ENCODE measurements at regions of chr2 and their contacts with region 1.

Region 1: DNA sequence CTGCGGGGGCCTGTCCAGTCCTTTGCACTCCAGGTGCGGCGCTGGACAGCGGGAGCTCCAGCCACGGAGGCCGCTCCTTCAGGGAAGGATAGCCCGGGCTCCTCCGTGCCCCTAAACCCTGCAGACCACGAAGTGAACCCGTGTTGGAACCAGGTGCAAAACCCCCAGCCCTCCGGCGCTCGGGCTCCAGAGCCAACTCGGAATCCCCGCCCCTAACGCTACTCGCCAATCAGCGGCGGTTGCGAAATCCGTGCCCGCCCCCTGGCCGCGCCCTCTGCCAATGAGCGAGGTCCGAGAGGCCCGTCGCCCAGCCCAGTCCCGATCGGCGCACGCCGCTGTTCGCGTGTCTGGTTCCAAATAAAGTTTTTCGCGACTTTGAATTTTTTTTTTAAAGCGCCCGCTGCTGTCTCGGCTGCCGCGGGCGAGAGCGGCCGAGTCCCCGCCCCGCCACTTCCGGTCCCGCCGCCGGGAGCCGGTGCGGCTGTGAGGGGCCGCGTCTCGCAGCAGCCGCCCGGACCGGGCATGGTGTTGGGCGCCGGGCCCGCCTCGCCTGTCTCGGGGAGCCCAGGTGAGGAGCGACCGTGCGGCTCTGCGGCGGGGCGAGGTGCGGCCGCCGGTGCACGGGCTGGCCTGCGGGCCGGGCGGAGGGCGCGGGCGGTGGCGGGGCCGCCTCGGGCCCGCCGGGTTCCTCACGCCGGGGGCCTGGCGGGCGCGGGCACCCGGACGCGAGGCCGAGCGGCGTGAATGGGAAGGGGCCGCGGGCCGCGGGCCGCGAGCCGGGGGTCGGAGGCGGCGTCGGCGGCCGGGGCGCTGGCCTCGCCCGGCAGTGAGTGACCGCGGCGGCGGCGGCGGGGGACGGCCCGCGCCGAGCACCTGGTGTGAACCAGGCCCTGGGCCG is at the start of gene UBE2F:
- DNase-seq: peak; percentile 96
- H3K4me3 Mint-ChIP-seq: peak within 1 kb of the TSS; percentile 81
- H3K27ac Mint-ChIP-seq: peak within 1 kb of the TSS; percentile 65
- H3K4me1 Mint-ChIP-seq: peaks cover 40% of the 10 kb centered on the region
- H3K27me3 Mint-ChIP-seq: no peaks in the 10 kb centered on the region
- total RNA-seq, gene UBE2F: 43.4 to 45.5 TPM

Region 2: GRCh38 chr2:237691908-237692600 is 274.8 kb before region 1 on chr2:
- CTCF ChIA-PET with region 1: no interaction called
- intact Hi-C with region 1: loop called (anchors 5 kb)
- DNase-seq: peak; percentile 94
- H3K4me3 Mint-ChIP-seq: peak overlapping the region; percentile 87
- H3K27ac Mint-ChIP-seq: peak overlapping the region; percentile 95
- H3K4me1 Mint-ChIP-seq: peaks cover 66% of the 10 kb centered on the region
- H3K27me3 Mint-ChIP-seq: no peaks in the 10 kb centered on the region

Region 3: GRCh38 chr2:237758185-237758584 is 208.6 kb before region 1 on chr2:
- CTCF ChIA-PET with region 1: no interaction called
- intact Hi-C with region 1: no loop called
- DNase-seq: no peak
- H3K4me3 Mint-ChIP-seq: no peak overlapping the region
- H3K27ac Mint-ChIP-seq: no peak overlapping the region
- H3K4me1 Mint-ChIP-seq: no peaks in the 10 kb centered on the region
- H3K27me3 Mint-ChIP-seq: no peaks in the 10 kb centered on the region

Region 4: DNA sequence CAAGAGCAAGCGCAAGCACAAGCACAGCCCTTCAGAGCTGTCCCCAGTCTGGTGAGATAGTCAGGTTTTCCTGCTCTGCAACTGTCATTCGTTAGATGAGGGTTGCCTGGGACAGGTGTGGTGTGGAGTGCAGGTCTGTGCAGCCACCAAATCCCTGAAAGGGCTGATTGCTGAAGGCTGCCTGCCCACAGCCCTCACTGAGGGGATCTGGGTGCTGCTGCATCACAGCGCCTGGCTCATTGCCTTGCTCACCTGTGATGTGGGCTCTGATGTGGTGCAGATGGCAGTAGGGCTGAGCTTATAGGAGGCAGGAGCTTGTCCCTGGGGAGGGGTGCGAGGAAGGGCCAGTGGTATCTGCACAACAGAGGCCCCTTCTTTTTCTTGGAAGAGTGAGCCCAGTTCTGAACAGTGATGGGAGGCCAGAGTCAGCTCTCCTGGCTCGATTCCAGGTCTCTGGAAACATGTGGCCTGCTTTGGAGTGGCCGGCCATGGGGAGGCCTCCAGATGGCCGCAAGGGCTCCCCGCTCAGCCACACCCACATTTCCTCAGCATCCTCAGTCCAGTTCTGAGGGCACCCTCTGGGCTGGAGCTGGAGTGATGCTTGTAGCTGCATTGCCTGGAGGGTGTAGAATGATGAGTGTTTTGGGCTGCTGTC is 11.4 kb after region 1 on chr2:
- CTCF ChIA-PET with region 1: interaction called, 28 read pairs
- intact Hi-C with region 1: no loop called
- DNase-seq: no peak
- H3K4me3 Mint-ChIP-seq: no peak overlapping the region
- H3K27ac Mint-ChIP-seq: no peak overlapping the region
- H3K4me1 Mint-ChIP-seq: peaks cover 46% of the 10 kb centered on the region
- H3K27me3 Mint-ChIP-seq: no peaks in the 10 kb centered on the region

Region 5: GRCh38 chr2:238060542-238061314 is 93.9 kb after region 1 on chr2 and contains the start of gene SCLY:
- CTCF ChIA-PET with region 1: no interaction called
- intact Hi-C with region 1: loop called (anchors 1 kb)
- DNase-seq: peak; percentile 99
- H3K4me3 Mint-ChIP-seq: peak within 1 kb of the TSS; percentile 90
- H3K27ac Mint-ChIP-seq: peak within 1 kb of the TSS; percentile 87
- H3K4me1 Mint-ChIP-seq: peaks cover 48% of the 10 kb centered on the region
- H3K27me3 Mint-ChIP-seq: peaks cover 3% of the 10 kb centered on the region
- total RNA-seq, gene SCLY: 46.4 to 46.7 TPM

Region 6: DNA sequence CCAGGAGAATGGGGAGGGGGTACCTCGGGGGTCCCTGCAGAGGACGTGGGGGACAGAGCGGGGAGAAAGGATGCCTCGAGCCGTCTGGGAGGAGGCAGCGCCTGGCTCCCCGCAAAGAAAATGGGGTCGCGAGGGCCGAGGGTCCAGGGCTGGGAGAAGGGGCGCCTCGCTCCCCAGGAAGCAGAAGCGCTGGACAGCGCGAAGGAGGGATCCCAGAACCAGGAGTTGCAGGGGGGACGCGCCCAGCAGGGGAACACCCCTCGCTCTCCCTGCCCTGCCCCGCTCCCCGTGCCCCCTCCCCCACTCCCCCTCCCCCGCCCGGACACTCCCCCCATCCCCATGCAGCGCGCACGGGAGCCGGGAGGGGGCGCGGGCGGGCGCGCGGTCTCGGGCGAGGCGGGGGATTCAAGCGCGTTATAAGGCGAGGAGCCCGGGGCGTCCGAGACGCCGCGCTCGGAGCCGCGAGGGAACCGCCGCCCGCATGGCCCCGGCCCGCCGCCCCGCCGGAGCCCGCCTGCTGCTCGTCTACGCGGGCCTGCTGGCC is 191.8 kb after region 1 on chr2 and contains the start of gene ERFE:
- CTCF ChIA-PET with region 1: no interaction called
- intact Hi-C with region 1: loop called (anchors 5 kb)
- DNase-seq: peak; percentile 61
- H3K4me3 Mint-ChIP-seq: peak within 1 kb of the TSS; percentile 62
- H3K27ac Mint-ChIP-seq: no peak within 1 kb of the TSS
- H3K4me1 Mint-ChIP-seq: peaks cover 7% of the 10 kb centered on the region
- H3K27me3 Mint-ChIP-seq: peaks cover 17% of the 10 kb centered on the region
- total RNA-seq, gene ERFE: 0.40 TPM in 1 of 2 experiments, not detected in the other

Region 7: DNA sequence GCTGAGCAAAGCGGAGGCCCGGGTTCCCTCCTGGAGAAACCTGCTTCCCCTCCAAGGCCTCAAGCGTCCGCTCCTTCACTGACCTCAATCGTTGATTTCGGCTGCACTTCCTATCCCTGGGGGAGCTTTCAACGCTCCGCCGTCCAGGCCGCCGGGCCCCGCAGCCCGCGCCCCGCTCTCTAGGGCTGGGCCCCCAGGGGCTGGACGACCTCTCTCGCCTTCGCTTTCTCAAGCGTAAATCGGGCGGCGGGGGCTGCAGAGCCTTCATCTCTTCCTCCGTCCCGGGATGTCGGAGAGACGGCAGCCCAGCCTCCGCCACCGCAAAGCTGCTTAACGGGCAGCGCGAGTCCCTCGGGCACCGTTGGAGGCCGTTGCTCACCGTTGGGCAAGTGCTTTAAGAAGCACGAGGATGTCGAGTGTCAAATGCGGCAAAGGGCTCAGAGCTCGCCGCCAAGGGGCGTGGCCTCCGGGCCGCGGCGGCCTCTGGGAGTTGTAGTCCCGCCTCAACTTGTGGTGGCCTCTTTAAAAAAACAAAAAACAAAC is 264.5 kb after region 1 on chr2:
- CTCF ChIA-PET with region 1: no interaction called
- intact Hi-C with region 1: no loop called
- DNase-seq: peak; percentile 84
- H3K4me3 Mint-ChIP-seq: peak overlapping the region; percentile 74
- H3K27ac Mint-ChIP-seq: no peak overlapping the region
- H3K4me1 Mint-ChIP-seq: peaks cover 16% of the 10 kb centered on the region
- H3K27me3 Mint-ChIP-seq: peaks cover 11% of the 10 kb centered on the region

Region 8: DNA sequence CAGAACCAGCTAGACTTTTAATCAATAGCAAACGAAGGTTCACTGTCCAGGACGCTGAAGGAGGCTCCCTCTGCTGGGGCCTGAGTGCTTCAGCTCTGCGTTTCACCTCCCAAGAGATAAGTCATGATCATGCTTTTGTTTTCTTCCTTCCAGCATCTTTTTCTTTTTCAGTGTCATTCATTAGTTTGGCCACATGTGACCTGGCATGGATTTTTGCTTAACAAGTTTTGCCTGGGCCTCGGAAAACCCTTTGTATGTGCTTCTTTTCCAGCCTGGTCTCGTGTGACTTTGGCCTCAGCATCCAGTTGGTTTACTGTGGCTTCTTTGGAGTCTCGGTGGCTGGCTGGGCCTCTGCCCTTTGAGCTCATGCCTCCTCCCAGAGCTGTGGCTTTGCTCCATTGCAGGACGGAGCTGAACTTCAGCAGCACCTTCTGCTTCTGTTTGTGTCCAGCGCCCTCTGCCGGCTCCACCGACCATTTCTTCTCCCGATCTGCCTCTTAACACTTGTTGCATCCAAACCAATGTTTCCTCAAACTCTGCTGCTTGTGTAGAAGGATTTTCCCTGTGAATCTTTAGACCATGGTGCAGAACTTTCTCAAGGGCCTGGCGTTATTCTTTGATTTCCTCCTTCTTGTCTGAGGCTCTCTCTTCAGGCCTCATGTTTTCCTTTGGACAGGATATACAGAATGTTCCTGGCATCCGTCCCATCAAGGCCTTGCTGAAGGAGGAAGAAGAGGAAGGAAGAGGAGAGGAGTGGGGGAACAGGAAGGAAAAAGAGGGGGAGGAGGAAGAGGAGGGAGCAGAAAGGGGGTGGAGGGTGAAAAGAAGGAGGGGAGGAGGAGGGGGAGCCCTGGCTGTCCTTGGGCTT is 296.6 kb after region 1 on chr2:
- CTCF ChIA-PET with region 1: interaction called, 13 read pairs
- intact Hi-C with region 1: loop called (anchors 1 kb)
- DNase-seq: peak; percentile 89
- H3K4me3 Mint-ChIP-seq: no peak overlapping the region
- H3K27ac Mint-ChIP-seq: no peak overlapping the region
- H3K4me1 Mint-ChIP-seq: peaks cover 3% of the 10 kb centered on the region
- H3K27me3 Mint-ChIP-seq: no peaks in the 10 kb centered on the region